Ovary (tissue), 10 donors: ENCODE measurements at regions of chr18 and their contacts with region 1.

Region 1: DNA sequence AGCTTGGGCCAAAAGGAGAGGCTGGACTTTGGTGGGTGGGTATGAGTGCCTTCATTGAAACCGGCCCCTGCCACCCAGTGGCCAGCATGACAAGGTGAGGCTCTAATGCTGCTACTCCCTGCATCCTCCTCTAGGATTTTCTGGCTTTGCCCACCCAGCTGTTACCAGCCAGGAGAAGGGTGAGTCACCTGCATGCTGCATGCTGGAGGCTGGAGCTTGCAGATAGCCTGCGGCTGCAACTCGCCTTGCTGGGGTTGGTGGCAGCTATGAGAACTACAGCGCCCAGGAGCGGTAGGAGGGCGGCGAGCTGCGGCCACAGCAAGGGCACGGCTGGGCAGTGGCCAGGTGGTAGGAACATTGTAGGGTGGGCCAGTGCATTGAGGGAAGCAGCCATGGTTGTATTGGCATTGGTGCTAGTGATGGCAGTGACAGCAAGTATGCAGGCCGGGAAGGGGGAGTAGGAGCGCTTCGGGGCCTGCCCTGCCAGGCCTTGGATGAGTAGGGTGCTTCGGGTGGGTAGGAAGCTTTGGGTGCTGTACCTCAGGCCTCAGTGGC is 75.4 kb upstream of the SLC35G4 start:
- DNase-seq: no peak
- H3K4me3 ChIP-seq: no peak overlapping the region
- H3K27ac ChIP-seq: no peak overlapping the region
- H3K4me1 ChIP-seq: no peaks in the 10 kb centered on the region
- H3K27me3 ChIP-seq: no peaks in the 10 kb centered on the region
- CTCF ChIP-seq: no peak
- EP300 ChIP-seq: no peak
- POLR2A ChIP-seq: no peak

Region 2: DNA sequence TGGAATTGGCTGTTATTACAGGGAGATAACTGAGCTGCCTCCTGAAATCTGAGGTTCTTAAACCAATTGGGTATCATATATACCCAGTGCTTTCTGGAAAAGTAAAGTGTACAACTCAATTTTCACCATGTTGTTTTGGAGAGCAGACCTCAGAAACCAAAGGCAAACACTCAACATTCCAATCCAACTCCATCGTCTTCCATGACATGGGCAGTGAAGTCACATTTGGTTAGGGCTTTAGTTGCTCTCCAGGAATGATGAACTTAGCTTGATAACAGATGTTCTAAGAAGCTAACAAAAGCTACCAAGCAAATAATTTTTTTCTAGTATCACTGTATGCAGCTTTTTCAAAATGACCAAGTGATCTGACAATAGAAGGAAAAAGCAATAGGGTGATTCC is 31.7 kb before region 1 on chr18:
- intact Hi-C with region 1: loop called in 1 of 4 experiments (anchors 2 kb)
- DNase-seq: no peak
- H3K4me3 ChIP-seq: no peak overlapping the region
- H3K27ac ChIP-seq: no peak overlapping the region
- H3K4me1 ChIP-seq: no peaks in the 10 kb centered on the region
- H3K27me3 ChIP-seq: no peaks in the 10 kb centered on the region
- CTCF ChIP-seq: no peak
- EP300 ChIP-seq: no peak
- POLR2A ChIP-seq: no peak

Region 3: GRCh38 chr18:11577271-11578112 is 43.5 kb after region 1 on chr18:
- intact Hi-C with region 1: loop called in 1 of 4 experiments (anchors 2 kb)
- DNase-seq: no peak
- H3K4me3 ChIP-seq: no peak overlapping the region
- H3K27ac ChIP-seq: no peak overlapping the region
- H3K4me1 ChIP-seq: no peaks in the 10 kb centered on the region
- H3K27me3 ChIP-seq: no peaks in the 10 kb centered on the region
- CTCF ChIP-seq: no peak
- EP300 ChIP-seq: no peak
- POLR2A ChIP-seq: no peak